ENCODE measurements at regions of chr12 and their contacts with region 1.

Region 1: GRCh38 chr12:95117178-95117599 is 43.8 kb upstream of the NR2C1 start:
- DNase-seq: peak in 2 of 3 donors; percentile 35 to 64
- ATAC-seq: peak; percentile 87 to 96 (median 90)
- H3K4me3 ChIP-seq: no peak overlapping the region
- H3K27ac ChIP-seq: no peak overlapping the region
- H3K4me1 ChIP-seq: peaks cover 0 to 4% (median 0%) of the 10 kb centered on the region in 4 donors
- H3K27me3 ChIP-seq: no peaks in the 10 kb centered on the region
- CTCF ChIP-seq: peak; percentile 70 to 90 (median 74)
- POLR2A ChIP-seq: no peak

Region 2: DNA sequence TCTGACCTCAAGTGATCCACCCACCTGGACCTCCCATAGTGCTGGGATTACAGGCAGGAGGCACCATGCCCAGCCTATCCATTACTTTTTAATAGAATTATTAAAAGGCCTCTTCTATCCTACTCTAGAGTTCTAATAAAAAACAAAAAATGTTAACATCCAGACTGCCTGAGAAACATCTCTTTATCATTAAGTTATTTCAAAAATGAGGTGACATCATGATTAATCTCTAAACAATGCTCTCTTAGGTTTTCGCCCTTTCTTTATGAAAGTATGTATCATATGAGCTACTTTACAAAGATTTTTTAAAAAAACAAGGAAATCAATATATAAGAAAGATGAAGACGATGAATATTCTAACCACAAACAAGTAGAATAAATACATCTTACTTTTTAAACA is 47.5 kb after region 1 on chr12:
- intact Hi-C with region 1: no loop called
- DNase-seq: no peak
- ATAC-seq: no peak
- H3K4me3 ChIP-seq: no peak overlapping the region
- H3K27ac ChIP-seq: no peak overlapping the region
- H3K4me1 ChIP-seq: peaks cover 0 to 15% (median 8%) of the 10 kb centered on the region in 4 donors
- H3K27me3 ChIP-seq: no peaks in the 10 kb centered on the region
- CTCF ChIP-seq: no peak
- POLR2A ChIP-seq: no peak

Region 3: GRCh38 chr12:95336390-95337067 is 219.3 kb after region 1 on chr12:
- intact Hi-C with region 1: loop called in 1 of 2 experiments (anchors 10 kb)
- DNase-seq: peak; percentile 69 to 78 (median 72)
- ATAC-seq: peak; percentile 99 to 100 (median 100)
- H3K4me3 ChIP-seq: no peak overlapping the region
- H3K27ac ChIP-seq: peak overlapping the region in 1 of 3 donors; percentile 21
- H3K4me1 ChIP-seq: no peaks in the 10 kb centered on the region
- H3K27me3 ChIP-seq: no peaks in the 10 kb centered on the region
- CTCF ChIP-seq: peak; percentile 69 to 96 (median 93)
- POLR2A ChIP-seq: no peak

Region 4: DNA sequence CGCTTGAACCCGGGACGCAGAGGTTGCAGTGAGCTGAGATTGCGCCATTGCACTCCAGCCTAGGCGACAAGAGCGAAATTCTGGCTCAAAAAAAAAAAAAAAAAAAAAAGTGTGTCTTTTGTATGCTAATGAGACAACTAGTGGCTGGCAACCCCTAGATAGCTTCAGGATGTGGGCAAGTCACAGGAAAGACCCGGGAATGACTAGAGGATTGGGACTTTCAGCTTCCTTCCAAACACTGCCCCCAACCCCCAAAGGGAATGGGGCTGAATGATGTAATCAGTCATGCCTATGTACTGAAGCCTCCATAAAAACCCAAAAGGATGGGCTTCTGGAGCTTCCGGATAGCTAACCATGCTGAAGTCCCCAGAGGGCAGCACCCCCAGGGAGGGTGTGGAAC is 405.5 kb after region 1 on chr12:
- intact Hi-C with region 1: no loop called
- DNase-seq: no peak
- ATAC-seq: no peak
- H3K4me3 ChIP-seq: no peak overlapping the region
- H3K27ac ChIP-seq: no peak overlapping the region
- H3K4me1 ChIP-seq: peaks cover 0 to 5% (median 0%) of the 10 kb centered on the region in 4 donors
- H3K27me3 ChIP-seq: no peaks in the 10 kb centered on the region
- CTCF ChIP-seq: no peak
- POLR2A ChIP-seq: no peak

Region 5: GRCh38 chr12:95532851-95533250 is 415.7 kb after region 1 on chr12:
- intact Hi-C with region 1: loop called (anchors 10 kb)
- DNase-seq: no peak
- ATAC-seq: no peak
- H3K4me3 ChIP-seq: no peak overlapping the region
- H3K27ac ChIP-seq: no peak overlapping the region
- H3K4me1 ChIP-seq: no peaks in the 10 kb centered on the region
- H3K27me3 ChIP-seq: no peaks in the 10 kb centered on the region
- CTCF ChIP-seq: no peak
- POLR2A ChIP-seq: no peak

Measured in right lobe of liver (tissue), 6 donors.